ENCODE measurements at regions of chr17 and their contacts with region 1.

Region 1: GRCh38 chr17:64129764-64130558 is at the start of gene ERN1:
- DNase-seq: peak; percentile 98
- H3K4me3 ChIP-seq: peak within 1 kb of the TSS; percentile 87
- H3K27ac ChIP-seq: peak within 1 kb of the TSS; percentile 78
- H3K4me1 ChIP-seq: peaks cover 43% of the 10 kb centered on the region
- H3K27me3 ChIP-seq: no peaks in the 10 kb centered on the region
- total RNA-seq, gene ERN1: 5.7 and 5.8 TPM in 2 replicates

Region 2: DNA sequence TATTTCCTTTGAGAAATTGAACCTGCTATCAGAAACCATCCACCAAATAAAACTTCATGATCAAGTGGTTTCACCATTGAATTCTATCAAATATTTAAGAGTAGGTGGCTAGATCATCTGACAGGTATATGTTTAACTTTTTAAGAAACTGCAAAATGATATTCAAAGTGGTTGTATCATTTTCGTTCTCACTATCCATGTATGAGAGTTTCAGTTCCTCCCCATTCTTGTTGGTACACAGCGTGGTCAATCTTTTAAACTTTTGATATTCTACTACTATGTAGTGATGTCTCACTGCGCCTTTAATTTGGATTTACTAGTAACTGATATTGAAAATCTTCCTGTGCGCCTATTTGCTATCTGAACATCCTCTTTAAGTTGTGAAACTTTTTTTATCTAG is 847.5 kb before region 1 on chr17:
- in situ Hi-C with region 1: no loop called
- DNase-seq: no peak
- H3K4me3 ChIP-seq: no peak overlapping the region
- H3K27ac ChIP-seq: no peak overlapping the region
- H3K4me1 ChIP-seq: peaks cover 39% of the 10 kb centered on the region
- H3K27me3 ChIP-seq: no peaks in the 10 kb centered on the region

Region 3: DNA sequence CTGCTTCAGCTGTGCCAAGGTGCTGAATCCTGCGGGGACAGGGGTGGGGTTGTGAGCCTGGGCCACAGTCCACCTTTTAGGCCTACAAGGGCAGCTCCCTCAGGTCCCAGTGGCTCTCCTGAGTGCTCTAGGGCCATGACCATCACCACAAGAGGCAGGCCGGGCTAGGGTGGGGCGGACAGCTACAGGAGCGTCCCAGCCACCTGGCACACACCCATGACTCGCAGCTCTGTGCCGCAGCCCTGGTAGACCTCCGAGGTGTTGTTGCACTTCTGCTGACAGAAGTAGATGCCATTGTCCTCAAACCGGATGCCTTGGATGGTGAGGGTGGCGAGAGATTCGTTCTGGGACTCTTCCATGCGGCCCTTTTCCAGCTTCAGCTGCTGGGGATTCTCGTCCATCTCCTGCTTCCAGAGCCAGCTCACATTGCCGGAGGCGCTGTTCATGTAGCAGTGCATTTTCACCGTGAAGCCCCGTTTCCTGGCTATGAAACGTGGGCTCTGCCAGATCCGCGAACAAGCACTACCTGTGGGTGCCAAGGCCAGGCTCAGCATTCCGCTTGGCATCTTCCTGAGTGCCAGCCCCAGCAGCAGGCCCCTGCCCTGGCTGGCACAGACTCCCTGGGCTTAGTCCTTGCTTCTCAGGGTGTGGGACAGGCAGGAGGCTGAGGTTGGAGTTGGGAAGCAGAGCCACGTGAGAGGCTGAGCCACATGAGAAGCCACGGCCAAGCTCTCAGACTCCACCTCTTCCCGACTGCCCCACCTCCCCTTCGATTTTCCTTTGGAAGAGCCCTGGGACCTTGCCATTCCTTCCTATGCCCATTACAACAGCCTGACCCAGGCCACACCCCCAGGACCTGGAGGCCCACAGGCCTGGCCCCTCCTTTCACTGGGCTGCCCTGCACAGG is 199.8 kb before region 1 on chr17:
- in situ Hi-C with region 1: loop called (anchors 10 kb)
- DNase-seq: no peak
- H3K4me3 ChIP-seq: no peak overlapping the region
- H3K27ac ChIP-seq: no peak overlapping the region
- H3K4me1 ChIP-seq: no peaks in the 10 kb centered on the region
- H3K27me3 ChIP-seq: peaks cover 7% of the 10 kb centered on the region; the same call in 1 of the 2 replicates

Region 4: DNA sequence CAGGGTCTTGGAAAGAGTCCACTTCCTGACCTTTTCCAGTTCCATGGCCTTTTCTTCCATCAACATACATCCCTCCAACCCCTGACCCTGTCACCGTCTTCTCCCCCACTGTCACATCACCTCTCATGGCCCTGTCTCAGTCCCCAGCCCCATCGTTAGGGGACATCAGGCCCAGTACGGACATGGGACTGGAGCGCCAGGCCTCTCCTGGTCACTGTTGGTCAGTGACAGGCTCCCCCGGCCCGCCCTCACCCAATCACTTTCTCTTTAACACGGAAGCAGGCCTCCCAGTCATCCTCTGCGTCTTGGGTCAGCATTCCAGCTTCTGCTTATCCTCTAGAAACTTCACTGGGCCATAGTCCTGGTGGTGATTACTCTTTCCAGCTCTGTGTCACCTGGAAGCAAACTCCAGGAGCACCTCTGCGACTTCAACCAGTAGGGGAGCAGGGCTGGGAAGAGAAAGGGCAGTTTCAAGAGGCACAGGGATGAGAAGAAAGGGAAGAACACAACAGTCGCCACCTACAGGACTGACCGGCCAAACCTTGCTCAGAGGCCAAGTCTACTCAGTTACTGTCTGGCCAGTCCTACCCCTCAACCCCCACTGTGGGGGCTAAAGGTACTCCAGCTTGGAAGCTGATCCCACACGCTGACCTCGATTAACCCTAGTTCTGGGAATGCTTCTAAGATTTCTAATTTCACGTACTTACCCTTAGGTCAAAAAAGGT is 93.6 kb before region 1 on chr17:
- in situ Hi-C with region 1: loop called (anchors 5 kb)
- DNase-seq: no peak
- H3K4me3 ChIP-seq: no peak overlapping the region
- H3K27ac ChIP-seq: no peak overlapping the region
- H3K4me1 ChIP-seq: no peaks in the 10 kb centered on the region
- H3K27me3 ChIP-seq: no peaks in the 10 kb centered on the region